Activated CD4-positive, alpha-beta T cell treated with anti-CD3 and anti-CD28 coated beads, Interleukin-2, amount 10 ng/mL, durations not matched to agents 7 days and 5 days (primary cell): ENCODE measurements at regions of chr5 and their contacts with region 1.

Region 1: DNA sequence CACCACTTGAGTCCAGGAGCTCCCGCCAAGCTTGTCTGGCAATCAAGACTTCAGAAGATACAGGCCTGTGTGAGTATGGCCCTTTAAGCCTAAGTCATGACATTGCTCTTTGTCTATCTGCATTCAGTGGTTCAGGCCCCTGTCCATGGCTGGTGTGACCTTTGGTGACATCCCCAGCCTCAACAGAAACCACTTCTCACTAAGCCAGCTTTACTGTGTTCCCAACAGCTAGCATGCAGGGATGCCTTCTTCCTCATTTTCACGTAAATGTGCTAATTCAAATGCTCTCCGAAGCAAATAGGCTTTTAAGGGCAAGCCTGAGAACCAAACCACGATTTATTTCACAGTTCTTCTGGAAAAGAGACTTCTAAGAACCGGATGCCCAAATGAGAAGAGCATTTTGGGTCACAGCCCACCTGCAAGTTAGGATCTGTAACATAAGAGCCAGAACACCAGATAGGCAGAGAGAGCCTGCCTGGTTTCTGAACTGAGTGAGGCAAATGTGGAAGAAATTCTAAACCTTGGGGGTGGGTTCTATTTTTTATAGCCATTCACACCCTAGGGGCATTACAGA is 14.9 kb downstream of the CD180 start:
- DNase-seq: peak; percentile 37
- H3K4me3 Mint-ChIP-seq: peak overlapping the region; percentile 5
- H3K27ac Mint-ChIP-seq: peak overlapping the region; percentile 85
- H3K4me1 Mint-ChIP-seq: peaks cover 60% of the 10 kb centered on the region
- H3K27me3 Mint-ChIP-seq: no peaks in the 10 kb centered on the region

Region 2: DNA sequence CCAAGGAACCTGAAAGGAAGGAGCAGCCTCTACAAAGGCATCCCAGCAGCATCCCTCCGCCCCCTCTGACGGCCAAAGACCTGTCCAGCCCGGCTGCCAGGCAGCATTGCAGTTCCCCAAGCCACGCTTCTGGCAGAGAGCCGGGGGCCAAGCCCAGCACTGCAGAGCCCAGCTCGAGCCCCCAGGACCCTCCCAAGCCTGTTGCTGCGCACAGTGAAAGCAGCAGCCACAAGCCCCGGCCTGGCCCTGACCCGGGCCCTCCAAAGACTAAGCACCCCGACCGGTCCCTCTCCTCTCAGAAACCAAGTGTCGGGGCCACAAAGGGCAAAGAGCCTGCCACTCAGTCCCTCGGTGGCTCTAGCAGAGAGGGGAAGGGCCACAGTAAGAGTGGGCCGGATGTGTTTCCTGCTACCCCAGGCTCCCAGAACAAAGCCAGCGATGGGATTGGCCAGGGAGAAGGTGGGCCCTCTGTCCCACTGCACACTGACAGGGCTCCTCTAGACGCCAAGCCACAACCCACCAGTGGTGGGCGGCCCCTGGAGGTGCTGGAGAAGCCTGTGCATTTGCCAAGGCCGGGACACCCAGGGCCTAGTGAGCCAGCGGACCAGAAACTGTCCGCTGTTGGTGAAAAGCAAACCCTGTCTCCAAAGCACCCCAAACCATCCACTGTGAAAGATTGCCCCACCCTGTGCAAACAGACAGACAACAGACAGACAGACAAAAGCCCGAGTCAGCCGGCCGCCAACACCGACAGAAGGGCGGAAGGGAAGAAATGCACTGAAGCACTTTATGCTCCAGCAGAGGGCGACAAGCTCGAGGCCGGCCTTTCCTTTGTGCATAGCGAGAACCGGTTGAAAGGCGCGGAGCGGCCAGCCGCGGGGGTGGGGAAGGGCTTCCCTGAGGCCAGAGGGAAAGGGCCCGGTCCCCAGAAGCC is 15.9 kb before region 1 on chr5:
- CTCF ChIA-PET with region 1: interaction called, 13 read pairs
- POLR2A ChIA-PET with region 1: no interaction called
- DNase-seq: peak; percentile 87
- H3K4me3 Mint-ChIP-seq: peak overlapping the region; percentile 90
- H3K27ac Mint-ChIP-seq: peak overlapping the region; percentile 99
- H3K4me1 Mint-ChIP-seq: peaks cover 77% of the 10 kb centered on the region
- H3K27me3 Mint-ChIP-seq: no peaks in the 10 kb centered on the region